CD8-positive, alpha-beta memory T cell (primary cell): ENCODE measurements at regions of chr14 and their contacts with region 1.

Region 1: DNA sequence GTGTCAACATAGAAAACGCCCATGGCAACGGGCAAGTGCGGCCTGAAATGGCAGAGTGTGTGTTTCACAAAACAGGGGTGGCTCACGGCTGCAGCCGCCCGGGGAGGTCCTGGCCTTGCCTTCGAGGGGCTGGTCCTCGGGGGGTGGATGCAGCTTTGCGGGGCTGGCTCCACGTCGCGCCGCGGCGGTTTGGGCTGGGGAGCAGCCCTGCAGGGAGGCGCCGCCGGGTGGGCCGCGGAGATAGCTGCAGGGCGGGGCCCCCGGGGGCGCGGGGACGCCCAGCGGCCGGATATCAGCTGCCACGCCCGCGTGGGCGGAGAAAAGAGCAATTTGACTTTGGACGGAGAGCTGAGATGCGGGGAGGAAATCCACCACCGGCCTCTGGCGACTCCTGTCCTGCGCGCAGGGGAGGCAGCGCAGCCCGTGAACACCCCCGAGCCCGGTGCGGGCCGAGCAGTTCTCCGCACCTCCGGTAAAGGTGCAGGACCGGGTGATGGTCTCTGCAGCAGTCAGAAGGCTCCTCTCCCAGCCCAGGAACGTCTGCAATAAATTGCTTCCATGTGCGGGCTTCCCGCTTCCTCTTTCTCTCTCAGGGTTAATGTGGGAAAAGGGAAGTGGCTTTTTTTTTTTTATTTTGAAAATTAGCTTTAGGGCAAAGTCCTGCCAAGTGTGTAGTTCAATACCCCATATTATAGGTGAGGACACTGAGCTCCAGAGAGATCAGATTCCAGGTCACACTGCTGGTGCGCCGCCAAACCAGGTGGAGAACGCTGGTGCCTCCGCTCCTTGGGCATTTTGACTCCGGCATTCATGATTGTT is 110.5 kb downstream of the ARF6 start:
- DNase-seq: peak; percentile 73 to 92 (median 79)
- H3K4me3 ChIP-seq: peak overlapping the region; percentile 82
- H3K4me3 Mint-ChIP-seq: peak overlapping the region; percentile 79 to 92 (median 81)
- H3K27ac ChIP-seq: peak overlapping the region; percentile 100
- H3K27ac Mint-ChIP-seq: peak overlapping the region; percentile 95 to 100 (median 99)
- H3K4me1 ChIP-seq: peaks cover 52% of the 10 kb centered on the region
- H3K4me1 Mint-ChIP-seq: peaks cover 51 to 74% (median 63%) of the 10 kb centered on the region in 3 donors
- H3K27me3 ChIP-seq: no peaks in the 10 kb centered on the region
- H3K27me3 Mint-ChIP-seq: peaks cover 0 to 1% of the 10 kb centered on the region in 2 donors

Region 2: DNA sequence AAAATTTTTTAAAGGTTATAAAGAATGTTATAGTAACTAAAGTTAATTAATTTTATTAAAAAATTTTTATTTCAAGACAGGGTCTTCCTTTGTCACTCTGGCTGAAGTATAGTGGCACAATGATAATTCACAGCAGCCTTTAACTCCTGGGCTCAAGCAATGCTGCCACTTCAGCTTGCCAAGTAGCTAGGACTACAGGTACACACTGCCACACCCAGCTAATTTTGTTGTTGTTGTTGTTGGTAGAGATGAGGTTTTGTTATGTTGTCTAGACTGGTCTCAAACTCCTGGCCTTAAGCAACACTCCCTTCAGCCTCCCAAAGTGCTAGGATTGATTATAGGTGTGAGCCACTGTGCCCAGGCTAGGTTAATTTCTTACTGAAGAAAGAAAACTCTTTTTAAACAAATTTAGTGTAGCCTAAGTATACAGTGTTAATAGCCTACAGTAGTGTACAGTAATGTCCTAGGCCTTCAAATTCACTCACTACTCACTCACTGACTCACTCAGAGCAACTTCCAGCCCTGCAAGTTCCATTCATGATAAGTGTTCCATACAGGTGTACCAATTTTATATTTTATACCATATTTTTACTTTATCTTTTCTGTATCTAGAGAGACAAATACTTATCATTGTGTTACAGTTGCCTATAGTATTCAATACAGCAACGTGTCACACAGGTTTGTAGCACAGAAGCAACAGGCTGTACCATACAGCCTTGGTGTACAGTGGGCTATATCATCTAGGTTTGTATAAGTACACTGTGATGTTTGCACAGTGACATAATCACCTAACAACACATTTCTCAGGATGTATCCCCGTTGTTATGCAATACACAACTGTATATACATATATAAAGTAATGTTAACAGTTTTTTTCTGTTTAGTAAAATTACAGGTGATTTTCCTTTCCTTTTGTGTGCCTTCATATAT is 343.6 kb before region 1 on chr14:
- CTCF ChIA-PET with region 1: no interaction called
- POLR2A ChIA-PET with region 1: no interaction called
- DNase-seq: no peak
- H3K4me3 ChIP-seq: no peak overlapping the region
- H3K4me3 Mint-ChIP-seq: no peak overlapping the region
- H3K27ac ChIP-seq: no peak overlapping the region
- H3K27ac Mint-ChIP-seq: peak overlapping the region in 1 of 8 donors; percentile 54
- H3K4me1 ChIP-seq: no peaks in the 10 kb centered on the region
- H3K4me1 Mint-ChIP-seq: peaks cover 0 to 3% (median 3%) of the 10 kb centered on the region in 3 donors
- H3K27me3 ChIP-seq: no peaks in the 10 kb centered on the region
- H3K27me3 Mint-ChIP-seq: no peaks in the 10 kb centered on the region

Region 3: GRCh38 chr14:49862089-49862673 is 141.2 kb before region 1 on chr14:
- CTCF ChIA-PET with region 1: interaction called, 163 read pairs
- POLR2A ChIA-PET with region 1: interaction called, 71 read pairs
- DNase-seq: peak; percentile 69 to 89 (median 85)
- H3K4me3 ChIP-seq: peak overlapping the region; percentile 94
- H3K4me3 Mint-ChIP-seq: no peak overlapping the region
- H3K27ac ChIP-seq: peak overlapping the region; percentile 95
- H3K27ac Mint-ChIP-seq: no peak overlapping the region
- H3K4me1 ChIP-seq: peaks cover 39% of the 10 kb centered on the region
- H3K4me1 Mint-ChIP-seq: peaks cover 10 to 13% (median 12%) of the 10 kb centered on the region in 3 donors
- H3K27me3 ChIP-seq: no peaks in the 10 kb centered on the region
- H3K27me3 Mint-ChIP-seq: peaks cover 0 to 13% of the 10 kb centered on the region in 2 donors

Region 4: DNA sequence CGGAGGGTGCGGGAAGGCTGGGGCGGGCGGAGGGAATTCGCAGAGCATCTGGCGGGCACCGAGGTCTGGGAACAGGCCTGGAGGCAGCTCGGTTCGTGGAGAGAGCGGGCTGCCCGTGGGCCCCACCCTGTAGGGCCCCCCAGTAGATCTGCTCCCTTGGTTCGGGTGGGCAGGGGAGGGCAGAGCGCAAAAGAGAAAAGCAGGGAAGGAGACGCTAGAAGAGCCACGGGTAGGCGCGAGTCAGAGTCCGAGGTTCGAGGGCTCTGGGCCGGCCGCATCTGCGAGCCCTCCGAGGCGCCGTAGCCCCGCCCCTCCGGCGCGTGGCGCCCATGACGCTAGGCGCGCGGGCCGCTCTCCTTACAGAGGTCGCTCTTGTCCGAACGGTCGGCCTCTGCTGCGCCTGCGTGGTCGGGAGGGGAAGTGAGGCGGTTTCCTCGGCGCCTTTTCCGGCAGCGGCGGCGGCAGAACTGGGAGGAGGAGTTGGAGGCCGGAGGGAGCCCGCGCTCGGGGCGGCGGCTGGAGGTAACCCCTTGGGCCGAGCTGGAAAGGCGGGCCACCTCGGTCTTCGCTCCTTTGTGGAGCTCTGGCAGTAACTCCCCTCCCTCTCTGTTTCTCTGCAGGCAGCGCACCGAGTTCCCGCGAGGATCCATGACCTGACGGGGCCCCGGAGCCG is 110.7 kb before region 1 on chr14 and contains the start of gene ARF6:
- CTCF ChIA-PET with region 1: interaction called, 14 read pairs
- POLR2A ChIA-PET with region 1: interaction called, 19 read pairs
- DNase-seq: peak; percentile 92 to 96 (median 94)
- H3K4me3 ChIP-seq: peak within 1 kb of the TSS; percentile 85
- H3K4me3 Mint-ChIP-seq: peak within 1 kb of the TSS; percentile 92 to 100 (median 99)
- H3K27ac ChIP-seq: peak within 1 kb of the TSS; percentile 97
- H3K27ac Mint-ChIP-seq: peak within 1 kb of the TSS; percentile 97 to 100 (median 99)
- H3K4me1 ChIP-seq: peaks cover 31% of the 10 kb centered on the region
- H3K4me1 Mint-ChIP-seq: peaks cover 30 to 44% (median 32%) of the 10 kb centered on the region in 3 donors
- H3K27me3 ChIP-seq: no peaks in the 10 kb centered on the region
- H3K27me3 Mint-ChIP-seq: peaks cover 0 to 1% of the 10 kb centered on the region in 2 donors
- total RNA-seq, gene ARF6: 168 TPM

Region 5: GRCh38 chr14:49971156-49972130 is 32.0 kb before region 1 on chr14:
- CTCF ChIA-PET with region 1: interaction called, 40 read pairs
- POLR2A ChIA-PET with region 1: interaction called, 50 read pairs
- DNase-seq: peak in 3 of 5 donors; percentile 61 to 84 (median 66)
- H3K4me3 ChIP-seq: peak overlapping the region; percentile 41
- H3K4me3 Mint-ChIP-seq: peak overlapping the region; percentile 60 to 85 (median 79)
- H3K27ac ChIP-seq: peak overlapping the region; percentile 54
- H3K27ac Mint-ChIP-seq: peak overlapping the region; percentile 91 to 100 (median 94)
- H3K4me1 ChIP-seq: peaks cover 56% of the 10 kb centered on the region
- H3K4me1 Mint-ChIP-seq: peaks cover 41 to 68% (median 62%) of the 10 kb centered on the region in 3 donors
- H3K27me3 ChIP-seq: no peaks in the 10 kb centered on the region
- H3K27me3 Mint-ChIP-seq: peaks cover 0 to 2% of the 10 kb centered on the region in 2 donors

Region 6: GRCh38 chr14:50045039-50045711 is 41.8 kb after region 1 on chr14:
- CTCF ChIA-PET with region 1: interaction called, 15 read pairs
- POLR2A ChIA-PET with region 1: interaction called, 29 read pairs
- DNase-seq: peak; percentile 39 to 83 (median 63)
- H3K4me3 ChIP-seq: peak overlapping the region; percentile 1
- H3K4me3 Mint-ChIP-seq: peak overlapping the region in 6 of 7 donors; percentile 34 to 88 (median 62)
- H3K27ac ChIP-seq: no peak overlapping the region
- H3K27ac Mint-ChIP-seq: peak overlapping the region; percentile 91 to 99 (median 95)
- H3K4me1 ChIP-seq: peaks cover 60% of the 10 kb centered on the region
- H3K4me1 Mint-ChIP-seq: peaks cover 57 to 77% (median 73%) of the 10 kb centered on the region in 3 donors
- H3K27me3 ChIP-seq: no peaks in the 10 kb centered on the region
- H3K27me3 Mint-ChIP-seq: no peaks in the 10 kb centered on the region

Region 7: DNA sequence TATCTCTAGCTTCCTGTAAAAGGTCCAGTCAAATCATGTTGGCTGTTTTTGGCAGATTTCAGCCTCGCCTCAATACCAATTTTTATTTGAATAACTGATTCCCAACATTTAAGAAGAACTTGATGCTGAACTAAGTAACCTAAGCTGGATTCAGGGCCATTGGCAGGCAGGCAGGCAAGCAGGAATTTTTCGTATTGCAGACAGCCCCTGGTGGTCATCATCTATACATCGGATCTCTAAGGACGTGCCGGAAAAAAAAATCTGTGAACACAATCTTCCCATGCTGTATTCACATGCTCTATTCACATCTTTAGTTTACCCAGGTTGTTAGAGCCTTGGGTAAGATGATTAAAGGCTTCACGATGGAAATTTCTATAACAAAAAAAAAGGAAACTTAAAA is 105.9 kb after region 1 on chr14:
- CTCF ChIA-PET with region 1: interaction called, 33 read pairs
- POLR2A ChIA-PET with region 1: interaction called, 14 read pairs
- DNase-seq: no peak
- H3K4me3 ChIP-seq: no peak overlapping the region
- H3K4me3 Mint-ChIP-seq: no peak overlapping the region
- H3K27ac ChIP-seq: no peak overlapping the region
- H3K27ac Mint-ChIP-seq: peak overlapping the region in 2 of 8 donors; percentile 17 to 40
- H3K4me1 ChIP-seq: peaks cover 8% of the 10 kb centered on the region
- H3K4me1 Mint-ChIP-seq: peaks cover 8 to 33% (median 22%) of the 10 kb centered on the region in 3 donors
- H3K27me3 ChIP-seq: no peaks in the 10 kb centered on the region
- H3K27me3 Mint-ChIP-seq: no peaks in the 10 kb centered on the region